ENCODE measurements at regions of chr1 and their contacts with region 1.

Region 1: GRCh38 chr1:97042551-97042950 is 321.0 kb downstream of the PTBP2 start:
- DNase-seq: no peak
- ATAC-seq: no peak
- H3K4me3 ChIP-seq: no peak overlapping the region
- H3K27ac ChIP-seq: no peak overlapping the region
- H3K4me1 ChIP-seq: no peaks in the 10 kb centered on the region
- H3K27me3 ChIP-seq: no peaks in the 10 kb centered on the region

Region 2: DNA sequence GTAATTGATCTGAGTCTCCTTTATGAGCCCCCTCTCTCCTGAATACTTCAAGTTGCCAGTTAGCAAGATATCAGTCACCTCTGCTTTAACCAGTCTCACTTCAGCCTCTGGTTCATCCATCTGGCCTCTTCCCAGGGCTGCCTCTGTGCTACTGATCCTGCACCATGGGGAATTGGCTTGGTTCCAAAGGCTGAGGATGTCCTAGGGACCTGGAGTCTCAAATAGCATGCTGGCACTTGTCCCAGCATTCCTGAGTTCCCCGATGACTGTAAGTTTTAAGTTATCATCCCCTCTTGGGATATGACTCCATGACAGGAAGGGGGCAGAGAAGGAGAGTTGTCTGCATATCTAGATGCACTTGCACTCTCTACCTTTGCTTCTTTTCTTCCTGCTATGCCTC is 68.9 kb before region 1 on chr1:
- intact Hi-C with region 1: loop called in 1 of 4 experiments (anchors 10 kb)
- DNase-seq: no peak
- ATAC-seq: no peak
- H3K4me3 ChIP-seq: no peak overlapping the region
- H3K27ac ChIP-seq: no peak overlapping the region
- H3K4me1 ChIP-seq: no peaks in the 10 kb centered on the region
- H3K27me3 ChIP-seq: no peaks in the 10 kb centered on the region